Psoas muscle (tissue), 8 donors: ENCODE measurements at regions of chr5 and their contacts with region 1.

Region 1: GRCh38 chr5:121138495-121138907 is 674.4 kb downstream of the PRR16 start:
- DNase-seq: no peak
- ATAC-seq: no peak
- H3K4me3 ChIP-seq: no peak overlapping the region
- H3K27ac ChIP-seq: no peak overlapping the region
- H3K4me1 ChIP-seq: no peaks in the 10 kb centered on the region
- H3K27me3 ChIP-seq: no peaks in the 10 kb centered on the region
- CTCF ChIP-seq: no peak

Region 2: DNA sequence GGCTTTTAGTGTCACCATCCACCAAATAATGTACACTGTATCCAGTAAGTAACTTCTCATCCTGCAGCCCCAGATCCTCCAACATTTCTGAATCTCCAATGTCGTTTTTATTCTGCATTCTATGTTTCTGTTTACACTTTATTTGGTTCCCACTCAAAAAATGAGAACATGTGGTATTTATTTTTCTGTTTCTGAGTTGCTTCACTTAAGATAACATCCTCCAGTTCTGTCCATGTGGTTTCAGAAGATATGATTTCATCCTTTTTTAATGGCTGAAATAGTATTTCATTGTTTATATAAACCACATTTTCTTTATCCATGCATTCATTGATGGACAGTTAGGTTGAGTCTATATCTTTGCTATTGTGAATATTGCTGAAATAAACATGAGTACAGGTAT is 35.9 kb after region 1 on chr5:
- intact Hi-C with region 1: loop called in 1 of 2 experiments (anchors 2 kb)
- DNase-seq: no peak
- ATAC-seq: no peak
- H3K4me3 ChIP-seq: no peak overlapping the region
- H3K27ac ChIP-seq: no peak overlapping the region
- H3K4me1 ChIP-seq: no peaks in the 10 kb centered on the region
- H3K27me3 ChIP-seq: no peaks in the 10 kb centered on the region
- CTCF ChIP-seq: no peak